Cardiac septum (tissue), 1 donor: ENCODE measurements at regions of chr18 and their contacts with region 1.

Region 1: DNA sequence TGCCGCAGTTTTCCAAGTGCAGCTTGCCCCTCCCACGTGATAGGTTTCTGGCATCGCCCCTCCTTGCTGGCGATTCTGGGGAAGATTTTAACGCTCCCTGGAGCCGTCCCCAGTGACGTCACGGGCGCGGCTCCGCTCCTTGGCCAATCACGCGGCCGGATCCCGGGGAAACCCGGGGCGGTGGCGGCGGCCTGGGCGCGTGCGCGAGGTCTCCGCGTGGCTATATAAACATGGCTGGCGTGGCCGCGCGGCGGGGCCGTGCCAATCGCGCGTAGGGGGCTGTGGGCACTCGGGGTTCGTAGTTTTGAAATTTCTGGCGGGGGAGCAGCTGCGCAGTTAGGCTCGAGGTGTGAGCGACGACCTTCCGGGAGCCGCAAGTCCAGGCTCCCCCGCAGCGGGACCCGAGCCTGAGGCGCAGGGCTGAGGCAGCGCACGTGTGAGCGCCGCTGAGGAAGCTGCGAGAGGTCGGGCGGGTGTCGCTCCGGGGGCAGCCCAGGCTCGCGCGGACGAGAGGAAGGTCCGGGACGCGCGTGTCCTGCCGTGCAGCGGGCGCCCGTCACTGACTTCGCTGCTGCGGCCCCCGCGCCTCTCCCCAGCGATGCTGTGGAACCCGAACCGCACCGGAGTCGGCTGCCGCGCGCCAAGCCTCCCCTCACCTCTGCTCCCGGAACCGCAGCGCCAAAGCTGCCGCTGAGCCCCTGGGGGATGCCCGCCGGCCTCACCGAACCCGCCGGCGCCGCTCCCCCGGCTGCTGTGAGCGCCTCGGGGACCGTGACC is at the start of gene TAF4B:
- DNase-seq: peak; percentile 92
- total RNA-seq, gene TAF4B: 0.92 TPM

Region 2: DNA sequence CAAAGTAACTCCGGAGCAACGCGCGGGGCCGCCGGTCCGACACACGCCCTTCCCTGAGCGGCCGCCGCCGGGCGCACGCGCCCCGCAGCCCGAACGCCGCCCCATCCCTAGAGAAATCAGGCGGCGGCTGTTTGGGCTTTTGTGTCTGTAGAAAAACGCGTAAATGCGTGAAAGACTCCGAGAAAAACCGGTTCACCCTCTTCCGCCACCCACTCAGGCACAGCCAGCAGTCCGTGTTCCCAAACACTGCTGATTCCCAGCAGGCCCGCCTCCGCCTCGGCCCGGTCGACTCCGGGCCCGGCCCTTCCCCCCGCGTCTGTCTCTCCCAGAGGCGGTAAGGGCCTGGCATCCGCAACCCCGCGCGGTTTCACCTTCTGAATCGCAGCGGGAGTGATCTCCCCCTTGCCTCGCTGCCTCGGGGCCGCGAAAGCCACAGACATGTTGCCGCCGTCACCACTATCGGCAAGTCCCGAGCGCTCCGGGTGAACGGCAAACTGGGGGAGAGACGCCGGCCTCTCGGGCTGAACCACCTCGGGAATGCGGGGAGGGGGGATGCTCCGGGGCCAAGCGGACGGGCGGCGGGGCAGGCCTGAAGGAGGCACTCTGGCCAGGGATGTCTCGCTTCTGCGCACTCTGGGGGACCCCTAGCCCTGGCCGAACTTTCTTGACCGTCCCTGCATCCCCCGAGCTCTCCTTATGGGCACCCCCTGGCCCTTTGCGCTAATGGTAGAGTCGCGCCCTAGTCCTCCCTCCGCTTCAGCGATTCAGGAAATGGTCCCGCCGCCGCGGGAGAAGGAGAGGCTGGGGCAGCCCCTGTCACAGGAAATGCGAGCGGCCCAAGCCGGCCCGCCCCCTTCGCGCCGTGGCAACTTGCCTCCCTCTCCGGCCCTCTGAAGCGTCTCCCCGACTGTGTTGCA is 136.0 kb before region 1 on chr18 and contains the start of gene SS18:
- intact Hi-C with region 1: loop called (anchors 2 kb)
- DNase-seq: peak; percentile 97
- total RNA-seq, gene SS18: 42.4 TPM

Region 3: DNA sequence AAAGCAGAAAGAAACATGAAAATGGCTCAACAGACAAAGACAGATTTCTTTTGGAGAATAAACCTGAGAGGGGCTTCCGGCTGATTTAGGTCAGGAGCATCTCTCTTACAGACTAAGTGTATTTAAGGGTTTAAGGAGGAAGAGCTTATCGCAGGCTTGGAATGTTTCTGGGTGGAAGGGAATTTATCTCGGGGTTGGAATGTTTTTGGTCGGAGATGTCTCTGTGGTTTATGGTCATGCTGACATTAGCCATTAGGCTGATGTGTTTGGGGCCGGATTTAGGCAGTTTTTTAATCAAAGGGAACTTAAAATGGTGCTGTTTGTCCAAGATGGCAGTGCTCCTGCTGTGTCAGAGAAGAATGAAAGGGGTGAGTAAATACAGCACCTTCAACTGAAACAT is 107.2 kb before region 1 on chr18:
- intact Hi-C with region 1: no loop called
- DNase-seq: no peak